ENCODE measurements at regions of chr12 and their contacts with region 1.

Region 1: DNA sequence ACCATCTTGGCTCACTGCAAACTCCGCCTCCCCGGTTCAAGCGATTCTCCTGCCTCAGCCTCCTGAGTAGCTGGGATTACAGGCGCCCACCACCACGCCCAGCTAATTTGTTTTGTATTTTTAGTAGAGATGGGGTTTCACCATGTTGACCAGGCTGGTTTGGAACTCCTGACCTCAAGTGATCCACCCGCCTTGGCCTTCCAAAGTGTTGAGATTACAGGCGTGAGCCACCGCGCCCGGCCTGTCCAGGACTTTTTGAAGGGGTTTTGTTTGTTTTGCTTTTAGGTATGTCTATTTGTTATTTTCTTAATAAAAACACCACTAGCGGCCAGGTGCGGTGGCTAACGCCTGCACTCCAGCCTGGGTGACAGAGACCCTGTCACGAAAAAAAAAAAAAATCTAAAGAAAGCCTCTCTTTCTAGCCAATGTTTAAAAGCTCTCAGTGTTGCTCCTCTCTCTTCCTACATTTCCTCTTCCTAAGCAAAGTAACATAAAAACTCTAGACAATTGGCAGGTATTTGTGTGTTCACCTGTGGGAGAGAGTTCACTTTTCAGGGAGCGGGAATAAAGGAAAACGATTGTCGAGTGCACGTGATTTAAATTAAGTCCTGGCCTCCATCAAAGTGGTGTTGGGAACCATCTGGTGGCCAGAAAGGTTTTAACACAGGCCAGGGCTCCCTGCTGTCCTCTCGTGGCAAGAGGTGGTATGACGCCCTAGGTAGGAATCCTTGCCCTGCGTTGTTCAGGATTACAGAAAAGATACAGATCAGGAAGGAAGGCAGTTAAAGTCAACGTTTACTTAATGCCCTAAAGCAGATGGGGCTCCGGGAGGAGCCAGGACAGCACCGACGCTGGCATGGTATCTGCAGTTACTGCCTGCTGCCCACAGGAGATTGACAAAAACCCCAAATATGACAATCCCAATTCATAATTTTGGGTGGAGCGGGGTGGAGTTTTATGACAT is 36.2 kb upstream of the ATP23 start:
- DNase-seq: peak; percentile 93
- H3K4me3 Mint-ChIP-seq: peak overlapping the region; percentile 49
- H3K27ac Mint-ChIP-seq: no peak overlapping the region
- H3K4me1 Mint-ChIP-seq: peaks cover 11% of the 10 kb centered on the region
- H3K27me3 Mint-ChIP-seq: peaks cover 5% of the 10 kb centered on the region

Region 2: DNA sequence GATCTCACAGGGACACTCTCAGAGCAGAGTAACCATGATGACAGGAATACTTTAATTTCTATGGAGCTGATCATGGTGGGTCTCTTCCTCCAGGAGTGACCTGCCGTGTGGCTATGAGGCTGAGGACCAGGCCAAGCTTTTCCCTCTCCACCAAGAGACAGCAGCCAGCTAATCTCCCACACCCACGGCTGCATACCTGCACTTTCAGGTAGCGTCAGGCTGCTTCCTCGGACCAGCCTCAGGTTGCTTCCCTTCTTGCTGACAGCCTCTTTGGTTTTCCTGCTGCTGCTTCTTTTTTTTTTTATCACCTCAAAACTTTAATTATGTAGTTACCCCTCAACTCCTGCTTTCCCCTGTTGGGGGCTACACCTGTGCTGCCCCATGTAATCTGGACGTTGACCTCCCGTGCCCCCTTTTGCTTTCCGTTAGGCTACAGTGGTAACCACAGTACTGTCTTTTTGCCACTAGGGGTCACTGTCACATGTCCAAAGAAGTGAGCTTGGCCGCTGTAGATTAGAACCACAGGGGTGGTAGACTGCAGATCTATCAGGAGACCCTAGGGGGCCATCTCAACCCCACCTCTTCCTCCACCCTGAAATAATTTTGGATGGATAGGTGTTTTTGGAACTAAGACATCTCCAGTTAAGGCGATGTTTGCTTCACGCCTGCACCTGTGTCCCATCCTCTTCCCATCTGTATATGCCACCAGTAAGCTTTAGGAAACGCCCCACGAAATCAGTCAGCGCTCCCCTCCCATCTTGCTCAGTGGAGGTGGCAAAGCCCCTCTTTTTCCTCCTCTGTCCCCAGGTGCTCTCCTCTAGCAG is 321.9 kb before region 1 on chr12:
- CTCF ChIA-PET with region 1: no interaction called
- intact Hi-C with region 1: loop called (anchors 1 kb)
- DNase-seq: peak; percentile 82
- H3K4me3 Mint-ChIP-seq: no peak overlapping the region
- H3K27ac Mint-ChIP-seq: no peak overlapping the region
- H3K4me1 Mint-ChIP-seq: no peaks in the 10 kb centered on the region
- H3K27me3 Mint-ChIP-seq: peaks cover 3% of the 10 kb centered on the region

Region 3: GRCh38 chr12:57759360-57759980 is 145.7 kb before region 1 on chr12:
- CTCF ChIA-PET with region 1: interaction called, 17 read pairs
- intact Hi-C with region 1: loop called (anchors 1 kb)
- DNase-seq: peak; percentile 63
- H3K4me3 Mint-ChIP-seq: no peak overlapping the region
- H3K27ac Mint-ChIP-seq: no peak overlapping the region
- H3K4me1 Mint-ChIP-seq: peaks cover 39% of the 10 kb centered on the region
- H3K27me3 Mint-ChIP-seq: no peaks in the 10 kb centered on the region

Region 4: DNA sequence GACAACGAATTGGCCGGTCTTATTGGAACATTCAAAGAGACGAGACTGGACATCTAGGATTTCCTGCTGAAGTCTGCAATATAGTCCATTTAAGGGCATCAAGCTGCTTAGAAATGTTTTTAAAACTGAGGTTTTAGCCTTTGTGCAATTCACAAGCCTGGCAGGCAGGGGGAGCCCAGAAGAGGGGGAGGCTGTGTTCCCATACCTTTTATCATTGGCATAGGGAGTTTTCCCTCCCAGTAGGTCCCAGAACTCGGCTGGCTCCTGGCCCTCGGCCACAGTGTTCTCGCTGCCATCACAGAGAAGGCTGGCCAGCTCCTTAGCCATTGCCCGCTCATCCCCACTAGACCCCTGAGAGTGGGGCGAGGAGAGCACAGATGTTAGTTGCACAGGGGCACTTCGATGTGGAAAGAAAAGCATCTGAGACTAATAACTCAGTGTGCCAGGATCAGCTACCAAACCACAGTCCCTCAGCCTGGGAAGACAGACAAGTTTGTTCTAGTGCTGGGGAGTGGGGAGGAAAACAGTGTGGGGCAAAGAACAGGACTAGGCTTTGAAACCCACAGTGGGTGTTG is 101.7 kb before region 1 on chr12:
- CTCF ChIA-PET with region 1: interaction called, 255 read pairs
- intact Hi-C with region 1: loop called (anchors 1 kb)
- DNase-seq: peak; percentile 51
- H3K4me3 Mint-ChIP-seq: no peak overlapping the region
- H3K27ac Mint-ChIP-seq: no peak overlapping the region
- H3K4me1 Mint-ChIP-seq: no peaks in the 10 kb centered on the region
- H3K27me3 Mint-ChIP-seq: no peaks in the 10 kb centered on the region

Region 5: GRCh38 chr12:57836442-57837375 is 68.4 kb before region 1 on chr12:
- CTCF ChIA-PET with region 1: interaction called, 147 read pairs
- intact Hi-C with region 1: loop called (anchors 1 kb)
- DNase-seq: peak; percentile 81
- H3K4me3 Mint-ChIP-seq: peak overlapping the region; percentile 40
- H3K27ac Mint-ChIP-seq: peak overlapping the region; percentile 89
- H3K4me1 Mint-ChIP-seq: peaks cover 97% of the 10 kb centered on the region
- H3K27me3 Mint-ChIP-seq: no peaks in the 10 kb centered on the region

Region 6: DNA sequence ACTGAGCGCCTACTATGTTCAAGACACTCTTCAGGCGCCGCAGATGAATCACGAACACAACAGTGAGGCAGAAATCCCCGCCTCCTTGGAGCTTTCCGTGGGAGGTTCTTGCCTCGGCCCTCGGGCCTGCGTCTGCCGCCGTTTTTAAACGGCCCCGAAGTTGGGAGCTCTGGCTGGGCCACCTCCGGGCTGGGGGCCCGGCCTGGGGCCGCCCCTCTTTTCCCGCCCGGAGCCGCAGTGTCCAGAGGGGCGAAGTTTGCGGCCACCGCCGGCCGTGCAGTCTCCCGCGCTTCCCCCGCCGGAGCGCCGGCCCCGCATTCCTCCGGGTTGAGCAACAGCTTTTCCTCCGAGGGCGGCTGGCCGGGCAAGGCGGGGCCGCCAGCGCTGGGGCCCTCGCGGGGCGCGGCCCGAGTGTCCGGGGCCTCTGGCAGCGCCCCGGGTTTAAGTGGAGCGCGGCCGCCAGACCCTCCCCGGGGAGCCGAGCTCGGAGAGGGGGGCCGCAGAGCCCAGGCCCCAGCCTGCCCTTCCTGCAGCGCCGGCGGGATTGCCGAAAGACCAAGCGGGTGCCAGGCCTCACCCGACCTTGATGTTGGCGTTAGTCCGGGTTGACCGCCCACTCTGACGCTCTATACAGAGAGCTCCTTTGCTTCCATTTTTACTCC is 39.9 kb before region 1 on chr12:
- CTCF ChIA-PET with region 1: interaction called, 19 read pairs
- intact Hi-C with region 1: no loop called
- DNase-seq: peak; percentile 82
- H3K4me3 Mint-ChIP-seq: peak overlapping the region; percentile 71
- H3K27ac Mint-ChIP-seq: peak overlapping the region; percentile 33
- H3K4me1 Mint-ChIP-seq: peaks cover 6% of the 10 kb centered on the region
- H3K27me3 Mint-ChIP-seq: no peaks in the 10 kb centered on the region

Region 7: DNA sequence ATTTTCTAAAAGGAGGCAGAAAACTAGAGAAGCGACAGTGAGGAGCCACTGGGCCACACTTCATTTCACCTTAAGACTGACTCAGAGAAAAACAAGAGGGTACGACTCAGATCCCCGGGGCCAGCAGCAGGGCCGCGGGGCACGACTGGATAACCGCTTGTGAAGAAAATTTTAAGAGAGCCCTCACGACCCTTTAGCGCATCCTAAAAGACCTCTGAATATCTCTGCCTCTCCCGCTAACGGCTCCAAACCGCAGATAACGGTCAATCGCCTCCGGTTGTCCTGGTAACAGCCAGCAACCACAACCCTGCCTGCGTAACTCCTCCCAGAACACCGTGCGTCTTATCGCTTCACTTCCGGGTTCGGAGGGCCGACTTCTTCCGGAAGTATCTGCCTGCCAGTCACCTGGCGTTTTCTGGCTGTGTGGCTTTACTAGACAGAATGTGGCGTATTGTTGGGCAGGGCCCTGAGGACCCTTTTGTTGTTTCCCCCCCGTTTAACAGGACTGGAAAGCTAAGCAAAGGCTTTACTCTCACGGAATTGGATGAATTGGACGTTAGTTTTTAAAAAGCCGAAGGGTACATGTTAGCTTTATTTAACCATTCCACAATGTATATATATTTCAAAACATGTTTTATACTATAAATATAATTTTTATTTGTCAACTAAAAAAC is 30.8 kb after region 1 on chr12:
- CTCF ChIA-PET with region 1: no interaction called
- intact Hi-C with region 1: loop called (anchors 1 kb)
- DNase-seq: peak; percentile 96
- H3K4me3 Mint-ChIP-seq: peak overlapping the region; percentile 96
- H3K27ac Mint-ChIP-seq: peak overlapping the region; percentile 96
- H3K4me1 Mint-ChIP-seq: peaks cover 23% of the 10 kb centered on the region
- H3K27me3 Mint-ChIP-seq: no peaks in the 10 kb centered on the region

Measured in activated naive CD4-positive, alpha-beta T cell treated with anti-CD3 and anti-CD28 coated beads for 36 hours (primary cell).